ENCODE measurements at regions of chr6 and their contacts with region 1.

Region 1: GRCh38 chr6:3876101-3876500 is 26.9 kb downstream of the FAM50B start:
- DNase-seq: peak in 2 of 5 donors; percentile 56 to 78
- ATAC-seq: peak; percentile 68 to 93 (median 84)
- H3K4me3 ChIP-seq: peak overlapping the region in 7 of 12 donors; percentile 0 to 32 (median 19)
- H3K27ac ChIP-seq: peak overlapping the region in 10 of 12 donors; percentile 3 to 62 (median 32)
- H3K4me1 ChIP-seq: peaks cover 0 to 16% (median 2%) of the 10 kb centered on the region in 12 donors
- H3K27me3 ChIP-seq: no peaks in the 10 kb centered on the region
- CTCF ChIP-seq: no peak
- POLR2A ChIP-seq: no peak

Region 2: DNA sequence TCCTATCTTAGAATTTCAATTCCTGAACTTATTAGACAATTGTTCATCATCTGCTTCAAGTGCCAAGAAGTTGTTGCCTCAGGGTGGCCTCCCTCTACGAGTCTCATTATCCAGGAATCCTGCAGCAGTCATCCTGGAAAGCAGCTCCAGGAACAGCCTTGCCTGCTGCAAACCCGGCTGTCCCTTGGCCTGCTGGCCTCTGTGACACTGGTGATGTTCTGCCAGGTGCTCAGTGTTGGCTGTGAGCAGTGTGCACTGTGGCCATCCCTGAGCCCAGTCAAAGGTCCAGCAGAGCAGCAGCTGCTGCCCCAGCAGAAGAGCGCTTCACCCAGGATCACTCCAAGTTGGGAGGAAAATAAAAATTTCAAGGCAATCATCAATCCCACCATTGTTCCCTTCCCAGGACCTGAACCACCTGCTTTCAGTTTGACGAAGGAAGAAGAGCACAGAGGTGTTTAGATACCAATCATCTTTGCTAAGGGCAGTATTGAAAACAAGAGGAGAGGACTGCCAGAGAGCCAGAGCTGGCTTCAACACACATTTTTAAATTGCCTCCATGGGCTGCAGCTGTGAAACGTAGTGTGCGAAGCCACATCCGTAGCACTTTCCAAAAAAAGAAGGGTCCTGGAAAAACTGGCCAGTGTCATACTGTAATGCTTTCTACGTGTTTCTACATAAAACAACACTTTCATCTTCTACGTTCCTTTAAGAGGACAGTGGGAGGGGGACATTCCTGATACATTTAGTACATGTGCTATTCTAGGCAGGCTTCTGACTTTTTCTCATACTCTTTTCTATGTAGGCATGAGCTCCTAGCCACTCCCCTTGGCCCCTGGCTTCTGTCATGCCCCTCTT is 34.2 kb before region 1 on chr6:
- intact Hi-C with region 1: loop called in 1 of 10 experiments (anchors 5 kb)
- DNase-seq: no peak
- ATAC-seq: peak; percentile 43 to 63 (median 48)
- H3K4me3 ChIP-seq: no peak overlapping the region
- H3K27ac ChIP-seq: peak overlapping the region in 1 of 12 donors; percentile 25
- H3K4me1 ChIP-seq: peaks cover 0 to 19% (median 9%) of the 10 kb centered on the region in 12 donors
- H3K27me3 ChIP-seq: no peaks in the 10 kb centered on the region
- CTCF ChIP-seq: no peak
- POLR2A ChIP-seq: no peak